H1 (cell line): ENCODE measurements at regions of chr5 and their contacts with region 1.

Region 1: DNA sequence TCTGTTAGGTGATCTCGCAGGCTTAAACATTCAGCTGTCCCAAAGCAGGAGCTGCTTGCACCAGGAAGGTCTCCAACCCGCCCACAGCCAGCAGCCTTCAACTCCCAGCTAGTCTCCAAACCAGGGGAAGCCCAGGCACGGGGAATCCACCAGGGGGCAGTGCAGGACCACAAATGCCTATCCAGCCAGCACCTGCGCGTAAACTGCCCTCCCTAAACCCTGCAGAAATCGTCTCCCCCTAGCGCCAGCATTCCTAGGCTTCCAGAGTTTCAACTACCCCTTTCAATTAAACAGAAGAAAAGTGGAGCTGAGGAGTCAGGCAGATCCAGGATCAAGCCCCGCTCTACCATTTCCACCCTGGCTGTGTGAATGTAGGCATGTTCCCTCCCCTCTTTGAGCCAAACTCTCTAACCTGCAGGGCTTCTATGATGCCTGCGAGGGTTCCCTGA is 72.0 kb downstream of the HRH2 start:
- DNase-seq: peak; percentile 97 to 100
- H3K4me3 ChIP-seq: peak overlapping the region; percentile 27 to 57 (median 44); a peak in 7 of 8 replicates
- H3K27ac ChIP-seq: no peak overlapping the region
- H3K4me1 ChIP-seq: peaks cover 0 to 13% (median 7%) of the 10 kb centered on the region in 4 experiments; a peak in 6 of 7 replicates
- H3K27me3 ChIP-seq: no peaks in the 10 kb centered on the region; a peak in 2 of 7 replicates
- CTCF ChIP-seq: peak in 2 of 3 experiments; percentile 99 to 100; a peak in 3 of 4 replicates
- EP300 ChIP-seq: peak in 1 of 2 experiments; percentile 66; a peak in 1 of 3 replicates
- POLR2A ChIP-seq: no peak
- RAD21 ChIP-seq: peak; percentile 100

Region 2: GRCh38 chr5:175590471-175590881 is 139.4 kb before region 1 on chr5:
- CTCF ChIA-PET with region 1: no interaction called
- POLR2A ChIA-PET with region 1: no interaction called
- DNase-seq: no peak
- H3K4me3 ChIP-seq: no peak overlapping the region
- H3K27ac ChIP-seq: no peak overlapping the region
- H3K4me1 ChIP-seq: peaks cover 0 to 3% (median 2%) of the 10 kb centered on the region in 4 experiments; a peak in 3 of 7 replicates
- H3K27me3 ChIP-seq: no peaks in the 10 kb centered on the region
- CTCF ChIP-seq: no peak
- EP300 ChIP-seq: no peak
- POLR2A ChIP-seq: no peak
- RAD21 ChIP-seq: no peak

Region 3: GRCh38 chr5:175718401-175719108 is 11.3 kb before region 1 on chr5:
- CTCF ChIA-PET with region 1: interaction called, 75 read pairs
- POLR2A ChIA-PET with region 1: no interaction called
- DNase-seq: peak in 1 of 2 experiments; percentile 82
- H3K4me3 ChIP-seq: no peak overlapping the region
- H3K27ac ChIP-seq: no peak overlapping the region
- H3K4me1 ChIP-seq: no peaks in the 10 kb centered on the region
- H3K27me3 ChIP-seq: no peaks in the 10 kb centered on the region
- CTCF ChIP-seq: peak; percentile 72 to 90 (median 74)
- EP300 ChIP-seq: no peak
- POLR2A ChIP-seq: no peak
- RAD21 ChIP-seq: peak; percentile 89 to 92

Region 4: DNA sequence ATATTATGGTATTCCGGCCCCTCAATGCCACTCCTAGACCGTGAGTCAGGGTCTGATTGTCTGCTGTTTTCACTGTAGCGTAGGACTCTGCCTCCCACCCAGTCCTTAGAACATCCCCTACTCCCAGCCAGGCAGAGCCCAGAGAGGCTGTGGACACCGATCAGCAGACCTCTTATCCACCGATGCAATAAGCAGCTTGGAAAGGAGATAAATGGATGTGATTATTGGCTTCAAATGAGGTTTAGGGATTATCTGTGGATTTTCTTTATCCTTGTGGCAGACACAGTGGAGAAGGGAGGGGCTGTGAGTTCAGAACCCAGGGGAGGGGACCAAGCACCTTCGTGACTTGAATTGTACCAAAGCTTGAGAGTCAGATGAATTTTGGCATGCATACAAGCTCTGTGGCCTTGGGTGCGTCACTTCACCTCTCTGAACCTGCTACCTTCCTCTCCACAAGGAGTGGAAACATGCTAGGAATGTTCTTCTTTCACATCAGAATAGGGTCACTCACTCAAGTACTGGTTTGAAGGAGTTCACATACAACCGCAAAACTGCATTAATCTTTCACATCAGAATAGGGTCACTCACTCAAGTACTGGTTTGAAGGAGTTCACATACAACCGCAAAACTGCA is 58.4 kb after region 1 on chr5:
- CTCF ChIA-PET with region 1: interaction called, 14 read pairs
- POLR2A ChIA-PET with region 1: no interaction called
- DNase-seq: no peak
- H3K4me3 ChIP-seq: no peak overlapping the region
- H3K27ac ChIP-seq: no peak overlapping the region
- H3K4me1 ChIP-seq: no peaks in the 10 kb centered on the region
- H3K27me3 ChIP-seq: peaks cover 0 to 1% (median 0%) of the 10 kb centered on the region in 4 experiments; a peak in 1 of 7 replicates
- CTCF ChIP-seq: no peak
- EP300 ChIP-seq: no peak
- POLR2A ChIP-seq: no peak
- RAD21 ChIP-seq: no peak

Region 5: DNA sequence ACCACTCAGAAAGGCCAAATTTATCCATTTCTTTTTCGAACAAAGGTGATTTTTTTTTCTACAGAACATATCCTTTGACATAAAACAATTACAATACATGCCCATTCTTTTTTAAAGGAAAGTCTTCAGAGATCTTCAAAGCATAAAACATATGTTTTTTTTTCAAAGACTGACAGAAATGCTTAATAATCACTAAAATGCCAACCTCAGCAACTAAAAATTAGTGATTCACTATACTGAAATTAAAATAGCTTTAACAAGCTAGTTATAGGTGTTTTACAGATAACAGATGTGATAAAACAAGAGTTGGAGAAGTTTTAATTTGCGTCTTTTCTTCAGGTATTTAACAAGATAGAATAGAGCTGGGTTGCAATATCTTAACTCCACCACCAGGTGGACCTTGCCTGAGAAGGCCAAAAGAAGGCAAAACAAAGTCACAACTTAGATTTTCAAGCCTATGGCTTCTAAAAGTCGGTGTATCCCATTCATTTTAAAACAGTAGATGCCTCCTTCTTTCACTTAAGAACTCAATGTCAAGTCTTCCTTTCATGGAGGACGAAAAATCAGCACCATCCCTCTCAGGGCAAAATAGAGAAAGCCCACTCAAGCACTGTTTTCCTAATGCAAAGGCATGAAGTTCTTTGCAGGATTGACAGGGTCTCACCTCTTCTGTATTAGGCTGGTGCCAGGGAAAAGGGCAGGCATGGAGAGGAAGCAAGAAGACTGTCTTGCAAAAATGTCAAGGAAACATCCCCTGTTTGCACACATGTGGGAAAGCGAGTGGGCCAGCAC is 110.4 kb after region 1 on chr5:
- CTCF ChIA-PET with region 1: interaction called, 17 read pairs
- POLR2A ChIA-PET with region 1: no interaction called
- DNase-seq: no peak
- H3K4me3 ChIP-seq: no peak overlapping the region
- H3K27ac ChIP-seq: no peak overlapping the region
- H3K4me1 ChIP-seq: peaks cover 0 to 27% (median 19%) of the 10 kb centered on the region in 4 experiments; a peak in 6 of 7 replicates
- H3K27me3 ChIP-seq: no peaks in the 10 kb centered on the region; a peak in 1 of 7 replicates
- CTCF ChIP-seq: peak in 2 of 3 experiments; percentile 37 to 62; a peak in 2 of 4 replicates
- EP300 ChIP-seq: no peak
- POLR2A ChIP-seq: no peak
- RAD21 ChIP-seq: peak; percentile 17 to 39; a peak in 2 of 4 replicates

Region 6: GRCh38 chr5:175867587-175868347 is 137.9 kb after region 1 on chr5:
- CTCF ChIA-PET with region 1: interaction called, 65 read pairs
- POLR2A ChIA-PET with region 1: interaction called, 3 read pairs
- DNase-seq: peak in 1 of 2 experiments; percentile 65
- H3K4me3 ChIP-seq: no peak overlapping the region
- H3K27ac ChIP-seq: no peak overlapping the region
- H3K4me1 ChIP-seq: peaks cover 9 to 13% (median 11%) of the 10 kb centered on the region in 4 experiments; a peak in 6 of 7 replicates
- H3K27me3 ChIP-seq: peaks cover 0 to 13% (median 3%) of the 10 kb centered on the region in 4 experiments; a peak in 3 of 7 replicates
- CTCF ChIP-seq: peak; percentile 71 to 86 (median 78)
- EP300 ChIP-seq: no peak
- POLR2A ChIP-seq: no peak
- RAD21 ChIP-seq: peak; percentile 82 to 87

Region 7: GRCh38 chr5:175895215-175896102 is 165.6 kb after region 1 on chr5:
- CTCF ChIA-PET with region 1: interaction called, 37 read pairs
- POLR2A ChIA-PET with region 1: no interaction called
- DNase-seq: no peak
- H3K4me3 ChIP-seq: no peak overlapping the region; a peak in 1 of 8 replicates
- H3K27ac ChIP-seq: peak overlapping the region; percentile 50; the same call in 1 of the 2 replicates
- H3K4me1 ChIP-seq: peaks cover 0 to 6% (median 0%) of the 10 kb centered on the region in 4 experiments; a peak in 3 of 7 replicates
- H3K27me3 ChIP-seq: no peaks in the 10 kb centered on the region
- CTCF ChIP-seq: no peak
- EP300 ChIP-seq: no peak
- POLR2A ChIP-seq: no peak
- RAD21 ChIP-seq: no peak